Calu3 (cell line): ENCODE measurements at regions of chr16 and their contacts with region 1.

Region 1: GRCh38 chr16:19717771-19718602 is at the starts of genes IQCK and KNOP1:
- DNase-seq: peak; percentile 93
- H3K4me3 Mint-ChIP-seq: peak within 1 kb of the TSS; percentile 94
- H3K27ac Mint-ChIP-seq: peak within 1 kb of the TSS; percentile 89
- H3K4me1 Mint-ChIP-seq: peaks cover 56% of the 10 kb centered on the region
- H3K27me3 Mint-ChIP-seq: no peaks in the 10 kb centered on the region
- CTCF ChIP-seq: no peak
- total RNA-seq, gene IQCK: 42.5 and 43.2 TPM in 2 replicates
- total RNA-seq, gene KNOP1: 84.9 and 99.0 TPM in 2 replicates

Region 2: DNA sequence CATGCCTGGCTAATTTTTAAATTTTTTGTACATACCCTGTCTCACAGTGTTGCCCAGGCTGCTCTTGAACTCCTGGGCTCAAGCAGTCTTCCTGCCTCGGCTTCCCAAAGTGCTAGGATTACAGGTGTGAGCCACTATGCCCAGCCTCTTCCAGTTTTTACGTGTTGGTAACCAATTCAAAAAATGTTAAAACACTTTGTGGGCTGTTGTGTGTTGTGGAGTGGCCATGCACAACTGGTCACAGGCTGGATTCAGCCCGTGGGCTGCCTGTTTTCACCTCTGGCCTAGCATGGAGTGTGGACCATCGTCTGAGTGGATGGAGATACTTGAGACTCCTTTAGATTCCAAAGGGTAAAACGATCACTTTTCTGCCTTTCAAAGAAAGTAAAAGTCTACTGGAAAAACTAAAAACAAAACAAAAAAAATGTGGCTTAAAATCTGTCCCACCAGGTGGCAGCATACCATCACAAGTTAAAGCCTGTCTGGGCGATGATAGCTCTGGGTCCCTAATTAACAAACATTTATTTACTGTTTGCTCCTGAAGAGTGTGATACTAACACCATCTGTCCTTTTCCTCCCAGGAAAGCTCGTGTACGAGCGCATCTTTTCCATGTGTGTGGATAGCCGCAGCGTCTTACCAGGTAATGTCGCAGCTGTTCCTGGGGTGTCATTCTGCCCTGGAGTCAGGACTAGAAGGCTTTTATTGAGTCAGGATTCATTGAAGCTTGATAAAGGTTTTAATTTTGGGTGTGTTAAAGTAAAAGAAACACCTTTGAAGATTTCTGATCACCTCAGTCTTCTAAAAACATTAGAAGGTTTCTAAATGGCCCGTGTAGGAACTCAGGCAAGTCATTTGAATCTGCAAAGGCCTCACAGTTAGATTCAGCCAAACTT is 116.7 kb before region 1 on chr16:
- CTCF ChIA-PET with region 1: interaction called, 3 read pairs
- intact Hi-C with region 1: loop called (anchors 5 kb)
- DNase-seq: peak; percentile 60
- H3K4me3 Mint-ChIP-seq: no peak overlapping the region
- H3K27ac Mint-ChIP-seq: no peak overlapping the region
- H3K4me1 Mint-ChIP-seq: peaks cover 21% of the 10 kb centered on the region
- H3K27me3 Mint-ChIP-seq: no peaks in the 10 kb centered on the region
- CTCF ChIP-seq: peak; percentile 64

Region 3: GRCh38 chr16:19700319-19700781 is 17.6 kb before region 1 on chr16:
- CTCF ChIA-PET with region 1: no interaction called
- intact Hi-C with region 1: loop called (anchors 2 kb)
- DNase-seq: peak; percentile 73
- H3K4me3 Mint-ChIP-seq: peak overlapping the region; percentile 30
- H3K27ac Mint-ChIP-seq: peak overlapping the region; percentile 69
- H3K4me1 Mint-ChIP-seq: peaks cover 45% of the 10 kb centered on the region
- H3K27me3 Mint-ChIP-seq: no peaks in the 10 kb centered on the region
- CTCF ChIP-seq: no peak

Region 4: GRCh38 chr16:19753815-19754643 is 36.0 kb after region 1 on chr16:
- CTCF ChIA-PET with region 1: interaction called, 6 read pairs
- intact Hi-C with region 1: loop called (anchors 1 kb)
- DNase-seq: peak; percentile 65
- H3K4me3 Mint-ChIP-seq: peak overlapping the region; percentile 27
- H3K27ac Mint-ChIP-seq: peak overlapping the region; percentile 98
- H3K4me1 Mint-ChIP-seq: peaks cover 80% of the 10 kb centered on the region
- H3K27me3 Mint-ChIP-seq: no peaks in the 10 kb centered on the region
- CTCF ChIP-seq: no peak